HEK293 (cell line): ENCODE measurements at regions of chr13 and their contacts with region 1.

Region 1: DNA sequence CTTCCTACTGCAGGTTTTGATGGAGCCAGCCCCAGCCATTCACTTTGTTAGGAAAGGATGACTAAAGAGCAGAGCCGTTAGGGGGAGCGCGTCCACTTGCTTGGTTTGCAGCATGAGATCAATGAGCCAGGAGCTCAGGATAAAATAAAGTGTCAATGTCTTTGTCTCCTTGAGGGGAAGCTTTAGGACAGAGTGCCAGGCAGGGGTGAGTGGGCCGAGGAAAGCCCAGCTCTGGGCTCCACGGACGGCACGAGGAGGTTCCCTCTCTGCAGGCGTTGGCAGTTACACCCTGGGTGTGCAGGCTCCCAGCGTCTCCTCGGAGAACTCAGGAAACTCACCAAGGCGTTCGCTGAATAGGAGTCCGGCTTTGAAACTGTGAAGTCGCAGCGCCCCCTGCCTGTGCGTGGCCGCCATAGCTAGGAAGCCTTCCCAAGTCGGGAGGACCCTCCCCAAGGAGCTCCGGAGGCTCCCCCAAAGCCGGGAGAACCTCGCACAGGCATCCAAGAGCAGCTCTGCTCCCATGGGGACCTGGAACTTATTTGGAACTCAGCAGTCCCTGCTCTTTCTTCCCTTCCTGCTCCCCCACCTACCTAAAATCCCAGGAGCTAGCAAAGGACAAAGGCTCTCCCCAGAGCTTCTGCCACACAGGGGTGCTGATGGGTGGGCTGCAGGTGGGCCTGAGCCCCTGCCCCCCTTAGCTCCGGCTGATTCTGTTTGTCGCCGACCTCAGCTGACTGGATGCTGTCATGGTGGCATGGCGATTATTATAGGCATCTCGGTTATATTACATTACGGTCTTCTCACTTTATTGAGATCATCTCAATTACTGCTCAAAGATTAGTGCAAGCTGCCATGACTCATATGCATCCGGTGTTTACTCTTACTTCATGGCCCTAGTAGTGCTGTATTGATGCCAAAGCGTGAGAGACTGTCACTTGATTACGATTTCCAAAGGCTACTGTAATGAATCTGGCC is 34.4 kb downstream of the GSX1 start:
- H3K4me3 ChIP-seq: peak overlapping the region; percentile 20
- H3K27ac ChIP-seq: no peak overlapping the region
- H3K4me1 ChIP-seq: no peaks in the 10 kb centered on the region
- CTCF ChIP-seq: no peak; the same call in 1 of the 2 replicates

Region 2: GRCh38 chr13:27362064-27362883 is 464.4 kb before region 1 on chr13:
- CTCF ChIA-PET with region 1: interaction called, 53 read pairs
- POLR2A ChIA-PET with region 1: interaction called, 3 read pairs
- H3K4me3 ChIP-seq: peak overlapping the region; percentile 35
- H3K27ac ChIP-seq: no peak overlapping the region; the same call in 1 of the 2 replicates
- H3K4me1 ChIP-seq: no peaks in the 10 kb centered on the region
- CTCF ChIP-seq: peak; percentile 78

Region 3: GRCh38 chr13:27379694-27380641 is 446.7 kb before region 1 on chr13:
- CTCF ChIA-PET with region 1: interaction called, 34 read pairs
- POLR2A ChIA-PET with region 1: no interaction called
- H3K4me3 ChIP-seq: no peak overlapping the region
- H3K27ac ChIP-seq: no peak overlapping the region
- H3K4me1 ChIP-seq: no peaks in the 10 kb centered on the region; the same call in 1 of the 2 replicates
- CTCF ChIP-seq: peak; percentile 37; the same call in 1 of the 2 replicates

Region 4: DNA sequence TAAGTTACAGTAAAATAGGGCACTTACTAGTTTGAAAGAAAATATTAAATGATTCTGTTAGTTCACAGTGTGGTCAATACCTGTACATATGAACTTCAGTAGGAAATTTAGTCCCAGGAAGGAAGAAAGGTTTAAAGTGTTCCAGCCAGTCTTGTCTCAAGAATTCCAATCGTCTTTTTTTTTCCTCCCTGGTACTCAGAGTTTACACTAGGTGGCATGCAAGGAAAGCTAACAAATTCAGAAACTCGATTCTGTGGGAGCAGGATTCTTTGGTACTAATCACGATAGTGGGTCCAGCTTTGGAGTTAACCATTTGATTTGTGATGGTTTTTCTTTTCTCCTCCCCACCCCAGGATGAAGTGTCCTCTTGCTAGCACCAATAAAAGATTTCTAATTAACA is 161.3 kb before region 1 on chr13:
- CTCF ChIA-PET with region 1: interaction called, 10 read pairs
- POLR2A ChIA-PET with region 1: no interaction called
- H3K4me3 ChIP-seq: no peak overlapping the region
- H3K27ac ChIP-seq: no peak overlapping the region
- H3K4me1 ChIP-seq: no peaks in the 10 kb centered on the region
- CTCF ChIP-seq: no peak

Region 5: DNA sequence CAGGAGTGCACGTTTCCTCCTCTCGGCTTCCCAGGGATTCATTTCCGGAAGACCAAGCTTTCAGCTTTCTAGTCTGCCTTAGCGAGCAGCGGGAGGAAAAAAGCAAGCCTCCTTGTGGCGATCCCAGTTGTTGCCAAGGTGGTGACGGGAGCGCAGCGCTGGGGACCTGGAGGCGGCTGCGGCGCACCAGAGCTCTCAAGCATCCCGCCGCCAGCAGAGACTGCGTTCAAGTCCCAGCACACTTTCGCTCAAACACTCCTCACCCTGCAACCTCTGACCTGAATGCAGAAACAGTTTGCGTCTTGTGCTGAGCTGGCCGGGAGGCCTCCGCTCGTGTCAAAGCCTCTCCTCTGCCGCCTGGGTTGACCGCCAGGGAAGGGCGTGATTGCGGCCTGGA is 29.4 kb before region 1 on chr13:
- CTCF ChIA-PET with region 1: interaction called, 17 read pairs
- POLR2A ChIA-PET with region 1: no interaction called
- H3K4me3 ChIP-seq: no peak overlapping the region
- H3K27ac ChIP-seq: no peak overlapping the region
- H3K4me1 ChIP-seq: no peaks in the 10 kb centered on the region; the same call in 1 of the 2 replicates
- CTCF ChIP-seq: no peak

Region 6: GRCh38 chr13:27953676-27954405 is 127.2 kb after region 1 on chr13:
- CTCF ChIA-PET with region 1: interaction called, 206 read pairs
- POLR2A ChIA-PET with region 1: interaction called, 3 read pairs
- H3K4me3 ChIP-seq: peak overlapping the region; percentile 39
- H3K27ac ChIP-seq: peak overlapping the region; percentile 46; the same call in 1 of the 2 replicates
- H3K4me1 ChIP-seq: no peaks in the 10 kb centered on the region; the same call in 1 of the 2 replicates
- CTCF ChIP-seq: peak; percentile 67

Region 7: GRCh38 chr13:27997904-27998522 is 171.3 kb after region 1 on chr13:
- CTCF ChIA-PET with region 1: interaction called, 13 read pairs
- POLR2A ChIA-PET with region 1: no interaction called
- H3K4me3 ChIP-seq: no peak overlapping the region
- H3K27ac ChIP-seq: no peak overlapping the region
- H3K4me1 ChIP-seq: no peaks in the 10 kb centered on the region
- CTCF ChIP-seq: peak; percentile 56; the same call in 1 of the 2 replicates

Region 8: GRCh38 chr13:28047757-28048388 is 221.2 kb after region 1 on chr13:
- CTCF ChIA-PET with region 1: no interaction called
- POLR2A ChIA-PET with region 1: no interaction called
- H3K4me3 ChIP-seq: no peak overlapping the region
- H3K27ac ChIP-seq: no peak overlapping the region
- H3K4me1 ChIP-seq: no peaks in the 10 kb centered on the region
- CTCF ChIP-seq: no peak